Left cardiac atrium (tissue), 4 donors: ENCODE measurements at regions of chr11 and their contacts with region 1.

Region 1: DNA sequence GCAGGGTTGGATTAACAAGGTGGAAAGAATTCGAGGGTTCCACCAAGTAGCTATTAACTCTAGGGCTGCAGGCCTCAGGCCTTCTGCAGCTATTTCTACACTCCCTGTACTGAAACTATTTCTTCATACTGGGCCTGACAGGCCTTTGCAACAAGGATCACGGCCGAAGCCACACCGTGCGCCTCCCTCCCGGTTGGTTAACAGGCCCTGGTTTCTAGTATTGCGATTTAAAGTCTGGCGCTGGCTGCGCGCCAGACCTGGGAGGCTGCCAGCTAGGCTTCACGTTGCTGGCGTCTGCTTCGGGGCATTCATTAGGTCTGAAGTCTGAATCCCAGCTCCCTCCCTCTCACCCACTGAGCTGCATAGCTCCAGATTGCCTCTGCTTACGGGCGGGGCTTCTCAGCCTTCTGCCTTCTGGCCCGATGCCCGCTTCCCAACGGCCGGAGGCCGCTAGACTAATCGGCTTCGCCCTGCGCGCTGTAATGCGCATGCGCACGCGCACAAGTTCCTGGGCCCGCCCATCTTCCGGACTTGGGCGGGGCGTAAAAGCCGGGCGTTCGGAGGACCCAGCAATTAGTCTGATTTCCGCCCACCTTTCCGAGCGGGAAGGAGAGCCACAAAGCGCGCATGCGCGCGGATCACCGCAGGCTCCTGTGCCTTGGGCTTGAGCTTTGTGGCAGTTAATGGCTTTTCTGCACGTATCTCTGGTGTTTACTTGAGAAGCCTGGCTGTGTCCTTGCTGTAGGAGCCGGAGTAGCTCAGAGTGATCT is 1.6 kb downstream of the LDHA start:
- DNase-seq: peak; percentile 98
- ATAC-seq: peak; percentile 89 to 93

Region 2: DNA sequence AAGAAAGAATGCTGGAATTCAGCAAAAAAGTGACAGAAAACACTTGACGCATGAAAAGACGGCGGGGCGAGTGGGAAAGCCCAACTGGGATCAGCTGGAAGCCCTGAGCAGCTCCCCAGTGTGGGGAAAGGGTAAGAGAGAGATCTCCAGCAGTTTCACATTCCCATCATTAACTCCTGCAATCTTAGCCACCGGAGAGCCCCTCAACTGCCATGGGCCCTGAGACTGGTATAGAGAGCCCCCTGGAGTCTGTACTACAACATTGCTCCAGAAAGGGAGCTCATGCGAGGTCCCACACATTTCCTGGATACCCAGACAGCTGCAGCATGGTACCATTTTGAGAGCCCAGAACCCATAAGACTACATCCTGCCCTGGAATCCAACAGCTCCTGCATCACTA is 192.2 kb before region 1 on chr11:
- intact Hi-C with region 1: no loop called
- DNase-seq: no peak
- ATAC-seq: no peak

Region 3: GRCh38 chr11:18321980-18322711 is 73.8 kb before region 1 on chr11 and contains the starts of genes GTF2H1 and HPS5:
- intact Hi-C with region 1: loop called in 1 of 2 experiments (anchors 5 kb)
- DNase-seq: peak; percentile 97
- ATAC-seq: peak; percentile 99
- total RNA-seq, gene GTF2H1: 22.2 to 22.4 TPM
- total RNA-seq, gene HPS5: 10.8 to 12.7 TPM

Region 4: DNA sequence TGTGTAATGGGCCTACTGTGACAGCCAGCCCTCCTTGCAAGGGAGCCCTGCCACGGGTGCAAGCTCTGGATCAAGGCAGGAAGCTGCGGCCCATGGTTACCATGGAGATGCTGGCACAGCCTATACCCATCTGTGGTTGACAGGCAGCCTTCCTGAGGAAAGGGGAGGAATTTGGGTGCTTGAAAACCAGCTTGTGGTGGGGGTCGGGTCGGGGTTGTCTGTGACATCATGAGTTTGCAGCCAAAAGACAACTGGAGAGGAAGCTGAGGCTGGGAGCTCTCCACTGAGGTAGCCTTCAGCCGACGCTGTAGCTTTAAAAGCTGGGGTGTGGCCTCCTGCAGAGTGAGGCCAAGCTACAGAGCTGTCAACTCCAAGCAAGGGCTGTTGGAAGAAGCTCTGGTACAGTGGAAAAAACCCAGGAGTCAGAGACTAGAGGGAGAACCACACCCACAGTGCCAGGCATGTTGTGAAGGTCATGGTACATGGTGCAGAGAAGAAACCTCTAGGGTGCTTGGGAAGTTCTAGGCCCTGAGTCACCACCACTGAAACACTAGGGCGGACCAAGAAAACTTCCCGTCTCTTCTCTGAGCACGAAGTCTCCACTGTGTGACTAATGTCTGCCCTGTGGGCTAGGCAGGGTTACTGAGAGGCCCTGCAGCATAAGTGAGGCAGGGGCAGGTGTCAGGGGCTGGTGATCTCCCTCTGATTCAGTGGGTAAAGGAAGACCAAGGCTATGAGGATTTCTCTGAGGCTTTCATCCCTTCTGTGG is 12.3 kb before region 1 on chr11:
- intact Hi-C with region 1: loop called in 1 of 2 experiments (anchors 1 kb)
- DNase-seq: peak; percentile 89
- ATAC-seq: peak; percentile 94 to 97

Region 5: GRCh38 chr11:18408558-18409242 is 12.8 kb after region 1 on chr11:
- intact Hi-C with region 1: no loop called
- DNase-seq: no peak
- ATAC-seq: no peak

Region 6: DNA sequence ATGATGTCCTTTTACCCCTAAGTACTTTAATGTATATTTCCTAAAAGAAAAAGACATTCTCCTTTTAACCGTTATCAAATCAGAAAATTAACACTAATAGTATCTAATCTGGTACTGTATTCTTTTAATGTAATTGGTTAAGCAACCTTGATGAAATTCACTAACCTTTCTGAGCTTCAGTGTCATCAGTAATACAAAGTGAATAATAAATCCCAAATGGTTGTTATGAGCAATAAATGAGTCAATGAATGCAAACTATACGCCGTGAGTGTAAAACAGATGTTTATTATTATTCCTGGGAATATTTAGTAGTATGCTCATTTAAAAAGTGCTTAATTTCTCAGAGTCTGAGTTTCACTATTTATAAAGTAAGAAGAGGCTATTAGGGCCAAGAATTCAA is 171.2 kb after region 1 on chr11:
- intact Hi-C with region 1: no loop called
- DNase-seq: no peak
- ATAC-seq: no peak